PC-9 (cell line): ENCODE measurements at regions of chr21 and their contacts with region 1.

Region 1: GRCh38 chr21:41612674-41613532 is 104.9 kb upstream of the TMPRSS2 start:
- DNase-seq: peak; percentile 87 to 97
- H3K4me3 ChIP-seq: peak overlapping the region; percentile 18; the same call in 1 of the 2 replicates
- H3K27ac ChIP-seq: peak overlapping the region; percentile 86
- H3K4me1 ChIP-seq: peaks cover 54% of the 10 kb centered on the region
- H3K27me3 ChIP-seq: no peaks in the 10 kb centered on the region
- CTCF ChIP-seq: peak; percentile 83

Region 2: GRCh38 chr21:41121785-41122421 is 491.0 kb before region 1 on chr21:
- CTCF ChIA-PET with region 1: no interaction called
- POLR2A ChIA-PET with region 1: no interaction called
- intact Hi-C with region 1: loop called (anchors 5 kb)
- DNase-seq: peak; percentile 56 to 76
- H3K4me3 ChIP-seq: no peak overlapping the region
- H3K27ac ChIP-seq: no peak overlapping the region
- H3K4me1 ChIP-seq: no peaks in the 10 kb centered on the region
- H3K27me3 ChIP-seq: peaks cover 3% of the 10 kb centered on the region
- CTCF ChIP-seq: peak; percentile 84

Region 3: DNA sequence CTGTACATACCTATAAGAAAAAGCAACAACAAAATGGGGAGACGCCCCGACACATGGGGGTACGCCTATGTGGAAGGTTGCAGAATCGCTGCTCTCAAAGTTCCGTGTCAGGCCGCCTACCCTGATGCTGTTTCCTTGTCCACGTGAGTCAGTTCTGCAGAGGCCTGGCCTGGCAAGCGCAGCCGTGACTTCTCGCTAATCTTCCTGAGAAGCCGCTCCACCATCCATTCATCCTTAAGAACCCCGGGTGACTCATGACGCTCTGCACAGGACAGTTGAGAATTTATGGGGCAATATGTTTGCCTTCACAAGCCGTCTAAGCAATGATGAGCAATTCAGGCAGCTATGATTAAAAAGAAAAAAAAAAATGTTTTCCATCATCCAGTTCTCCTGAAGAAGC is 17.3 kb after region 1 on chr21:
- CTCF ChIA-PET with region 1: interaction called, 22 read pairs
- POLR2A ChIA-PET with region 1: interaction called, 10 read pairs
- intact Hi-C with region 1: loop called (anchors 1 kb)
- DNase-seq: peak; percentile 87 to 100
- H3K4me3 ChIP-seq: no peak overlapping the region
- H3K27ac ChIP-seq: peak overlapping the region; percentile 94
- H3K4me1 ChIP-seq: peaks cover 50% of the 10 kb centered on the region
- H3K27me3 ChIP-seq: no peaks in the 10 kb centered on the region
- CTCF ChIP-seq: no peak

Region 4: GRCh38 chr21:41678944-41679343 is 66.0 kb after region 1 on chr21:
- CTCF ChIA-PET with region 1: interaction called, 6 read pairs
- POLR2A ChIA-PET with region 1: interaction called, 25 read pairs
- intact Hi-C with region 1: loop called (anchors 1 kb)
- DNase-seq: peak; percentile 96 to 100
- H3K4me3 ChIP-seq: peak overlapping the region; percentile 73
- H3K27ac ChIP-seq: peak overlapping the region; percentile 99
- H3K4me1 ChIP-seq: peaks cover 56% of the 10 kb centered on the region
- H3K27me3 ChIP-seq: no peaks in the 10 kb centered on the region
- CTCF ChIP-seq: no peak

Region 5: GRCh38 chr21:41777951-41778874 is 165.3 kb after region 1 on chr21:
- CTCF ChIA-PET with region 1: interaction called, 14 read pairs
- POLR2A ChIA-PET with region 1: no interaction called
- intact Hi-C with region 1: loop called (anchors 1 kb)
- DNase-seq: peak; percentile 62 to 81
- H3K4me3 ChIP-seq: no peak overlapping the region
- H3K27ac ChIP-seq: peak overlapping the region; percentile 13; the same call in 1 of the 2 replicates
- H3K4me1 ChIP-seq: peaks cover 42% of the 10 kb centered on the region
- H3K27me3 ChIP-seq: no peaks in the 10 kb centered on the region
- CTCF ChIP-seq: peak; percentile 75

Region 6: DNA sequence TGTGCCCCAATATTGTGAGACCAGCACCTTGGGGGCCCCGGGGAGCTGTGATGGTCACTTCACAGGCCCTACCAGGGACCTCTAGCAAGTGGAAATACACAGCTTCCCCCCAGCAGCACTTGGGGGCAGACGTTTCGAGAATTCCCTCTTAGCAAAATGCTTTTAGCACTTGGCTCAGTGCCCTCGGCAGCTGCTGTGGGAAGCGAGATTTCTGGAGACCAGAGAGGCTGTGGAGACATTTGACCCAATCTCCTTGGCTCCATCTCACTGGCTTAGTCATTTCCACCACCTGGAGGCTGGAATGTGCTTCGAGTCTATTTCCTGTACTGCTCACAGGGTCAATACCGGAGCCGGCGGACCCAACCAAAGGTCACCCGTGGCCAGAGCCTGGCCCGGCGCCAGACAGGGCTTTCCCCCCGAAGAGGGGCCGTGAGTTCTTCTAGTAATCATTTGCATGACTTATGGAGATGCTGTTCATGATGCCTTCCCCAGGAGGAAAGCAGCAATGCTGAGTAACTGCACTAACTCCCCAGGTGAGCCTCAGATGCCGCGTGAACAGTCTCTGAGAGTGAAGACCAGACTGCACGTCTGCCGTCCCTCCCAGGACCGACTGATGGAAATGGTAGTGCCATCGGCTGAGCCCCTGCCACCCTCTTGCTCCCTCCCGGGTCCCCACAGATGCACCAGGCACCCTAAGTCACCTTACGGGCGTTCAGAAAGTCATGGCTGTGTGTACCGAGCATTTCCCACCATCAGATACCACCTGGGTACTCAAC is 345.3 kb after region 1 on chr21:
- CTCF ChIA-PET with region 1: no interaction called
- POLR2A ChIA-PET with region 1: no interaction called
- intact Hi-C with region 1: loop called (anchors 5 kb)
- DNase-seq: peak; percentile 85 to 93
- H3K4me3 ChIP-seq: no peak overlapping the region
- H3K27ac ChIP-seq: peak overlapping the region; percentile 86
- H3K4me1 ChIP-seq: peaks cover 54% of the 10 kb centered on the region
- H3K27me3 ChIP-seq: no peaks in the 10 kb centered on the region
- CTCF ChIP-seq: peak; percentile 55; the same call in 1 of the 2 replicates

Region 7: DNA sequence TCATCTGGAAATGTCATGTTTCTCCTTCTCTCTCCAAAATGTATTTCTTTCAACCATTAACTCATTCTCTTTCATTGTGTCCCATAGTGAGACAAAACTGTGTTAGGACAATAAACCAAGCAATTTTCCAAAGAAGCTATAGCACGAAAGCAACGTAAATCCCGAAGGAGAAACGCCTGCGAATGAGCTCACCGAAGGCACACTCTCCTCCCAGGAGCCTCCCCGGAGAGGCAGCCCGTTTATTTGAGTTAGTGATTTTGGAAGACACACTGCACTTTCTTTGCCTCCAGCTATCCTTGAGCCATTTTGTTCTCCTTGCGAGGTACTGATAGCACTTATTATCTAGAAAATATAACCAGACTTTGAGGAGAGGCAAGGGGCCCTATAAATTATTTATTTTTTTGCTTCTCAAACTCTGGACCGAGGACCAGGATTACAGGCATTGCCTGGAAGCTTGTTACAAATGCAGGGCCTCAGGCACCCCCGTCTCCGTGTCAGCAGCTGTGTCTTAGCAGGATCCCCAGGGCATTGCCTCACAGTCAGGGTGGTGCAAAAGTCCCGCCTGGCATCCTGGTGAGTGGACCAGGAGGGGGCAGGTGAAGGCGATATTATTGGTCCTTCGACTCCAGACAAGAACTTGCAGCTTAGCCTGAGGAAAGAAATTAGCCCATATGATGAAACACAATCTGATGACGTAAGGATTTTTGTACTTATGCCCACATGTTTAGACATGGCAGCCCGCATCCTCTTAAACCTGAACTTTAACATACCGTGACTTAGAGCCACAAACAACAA is 842.1 kb after region 1 on chr21:
- CTCF ChIA-PET with region 1: no interaction called
- POLR2A ChIA-PET with region 1: no interaction called
- intact Hi-C with region 1: loop called (anchors 5 kb)
- DNase-seq: no peak
- H3K4me3 ChIP-seq: no peak overlapping the region
- H3K27ac ChIP-seq: no peak overlapping the region
- H3K4me1 ChIP-seq: no peaks in the 10 kb centered on the region
- H3K27me3 ChIP-seq: no peaks in the 10 kb centered on the region
- CTCF ChIP-seq: no peak